ENCODE measurements at regions of chr7 and their contacts with region 1.

Region 1: GRCh38 chr7:142301923-142302550 is 44.2 kb upstream of the PRSS58 start:
- DNase-seq: peak; percentile 68
- H3K4me3 ChIP-seq: no peak overlapping the region
- H3K27ac ChIP-seq: no peak overlapping the region
- H3K4me1 ChIP-seq: peaks cover 90% of the 10 kb centered on the region
- CTCF ChIP-seq: peak; percentile 90

Region 2: GRCh38 chr7:142263598-142264380 is 38.2 kb before region 1 on chr7:
- CTCF ChIA-PET with region 1: no interaction called
- POLR2A ChIA-PET with region 1: no interaction called
- intact Hi-C with region 1: no loop called
- DNase-seq: no peak
- H3K4me3 ChIP-seq: no peak overlapping the region
- H3K27ac ChIP-seq: no peak overlapping the region
- H3K4me1 ChIP-seq: no peaks in the 10 kb centered on the region
- CTCF ChIP-seq: no peak

Region 3: GRCh38 chr7:142313528-142313927 is 11.5 kb after region 1 on chr7:
- CTCF ChIA-PET with region 1: interaction called, 13 read pairs
- POLR2A ChIA-PET with region 1: interaction called, 20 read pairs
- intact Hi-C with region 1: no loop called
- DNase-seq: peak; percentile 73
- H3K4me3 ChIP-seq: peak overlapping the region; percentile 1
- H3K27ac ChIP-seq: peak overlapping the region; percentile 28
- H3K4me1 ChIP-seq: peaks cover 22% of the 10 kb centered on the region
- CTCF ChIP-seq: no peak

Region 4: DNA sequence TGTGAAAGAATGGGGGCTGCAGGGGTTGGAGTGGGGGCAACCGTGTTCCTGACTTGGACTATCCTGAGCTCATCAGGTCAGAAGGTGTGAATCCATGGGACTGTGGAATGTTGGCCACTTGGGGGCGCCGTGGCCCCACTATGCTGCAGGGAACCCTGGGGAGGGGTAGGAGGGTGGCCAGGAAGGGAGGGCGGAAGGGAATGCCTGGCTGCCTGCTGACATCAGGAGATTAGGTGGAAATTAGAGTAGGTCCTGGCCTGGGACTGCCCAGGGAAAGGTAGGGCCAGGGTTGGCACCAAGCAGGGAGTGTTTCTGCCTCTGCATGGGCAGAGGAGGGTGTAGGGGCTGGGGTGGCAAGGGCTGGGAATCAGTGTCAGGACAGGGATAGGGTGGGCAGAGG is 21.7 kb after region 1 on chr7:
- CTCF ChIA-PET with region 1: interaction called, 9 read pairs
- POLR2A ChIA-PET with region 1: interaction called, 11 read pairs
- intact Hi-C with region 1: no loop called
- DNase-seq: peak; percentile 65
- H3K4me3 ChIP-seq: no peak overlapping the region
- H3K27ac ChIP-seq: no peak overlapping the region
- H3K4me1 ChIP-seq: peaks cover 33% of the 10 kb centered on the region
- CTCF ChIP-seq: peak; percentile 82

Measured in OCI-LY7 (cell line).